ENCODE measurements at regions of chr1 and their contacts with region 1.

Region 1: DNA sequence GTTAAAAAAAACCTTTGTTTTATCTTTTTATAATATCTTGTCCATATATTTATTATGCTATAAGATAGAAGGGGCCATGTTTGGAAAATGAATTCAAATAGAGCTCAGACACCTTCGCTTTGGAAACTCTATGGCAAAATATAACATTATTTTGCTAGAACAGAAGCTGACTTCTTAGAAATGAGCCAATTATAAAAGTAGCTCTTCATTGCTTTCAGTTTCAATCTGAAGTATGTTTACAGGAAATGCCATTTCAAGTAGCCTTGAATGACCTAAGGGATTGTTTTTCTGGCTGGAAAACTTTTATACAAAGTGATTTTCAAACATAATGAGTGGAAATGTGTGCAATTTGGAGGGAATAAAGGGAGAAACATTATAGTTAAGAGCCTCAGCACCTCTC is 37.8 kb upstream of the GBP5 start:
- DNase-seq: no peak
- ATAC-seq: peak in 6 of 8 donors; percentile 61 to 88 (median 82)
- H3K4me3 ChIP-seq: peak overlapping the region in 4 of 10 donors; percentile 1 to 16 (median 8)
- H3K27ac ChIP-seq: peak overlapping the region; percentile 13 to 88 (median 74)
- H3K4me1 ChIP-seq: peaks cover 7 to 40% (median 28%) of the 10 kb centered on the region in 9 donors
- H3K27me3 ChIP-seq: no peaks in the 10 kb centered on the region
- CTCF ChIP-seq: no peak

Region 2: GRCh38 chr1:89261926-89262515 is 48.5 kb before region 1 on chr1:
- intact Hi-C with region 1: loop called in 1 of 10 experiments (anchors 10 kb)
- DNase-seq: peak in 1 of 2 donors; percentile 39
- ATAC-seq: peak in 5 of 8 donors; percentile 54 to 69 (median 60)
- H3K4me3 ChIP-seq: peak overlapping the region in 7 of 10 donors; percentile 11 to 44 (median 32)
- H3K27ac ChIP-seq: peak overlapping the region in 7 of 10 donors; percentile 3 to 59 (median 42)
- H3K4me1 ChIP-seq: peaks cover 0 to 47% (median 31%) of the 10 kb centered on the region in 9 donors
- H3K27me3 ChIP-seq: no peaks in the 10 kb centered on the region
- CTCF ChIP-seq: no peak

Region 3: GRCh38 chr1:89276690-89277089 is 33.8 kb before region 1 on chr1:
- intact Hi-C with region 1: loop called in 1 of 10 experiments (anchors 1 kb)
- DNase-seq: no peak
- ATAC-seq: no peak
- H3K4me3 ChIP-seq: no peak overlapping the region
- H3K27ac ChIP-seq: no peak overlapping the region
- H3K4me1 ChIP-seq: peaks cover 0 to 59% (median 0%) of the 10 kb centered on the region in 9 donors
- H3K27me3 ChIP-seq: no peaks in the 10 kb centered on the region
- CTCF ChIP-seq: peak in 3 of 9 donors; percentile 23 to 49 (median 28)

Region 4: DNA sequence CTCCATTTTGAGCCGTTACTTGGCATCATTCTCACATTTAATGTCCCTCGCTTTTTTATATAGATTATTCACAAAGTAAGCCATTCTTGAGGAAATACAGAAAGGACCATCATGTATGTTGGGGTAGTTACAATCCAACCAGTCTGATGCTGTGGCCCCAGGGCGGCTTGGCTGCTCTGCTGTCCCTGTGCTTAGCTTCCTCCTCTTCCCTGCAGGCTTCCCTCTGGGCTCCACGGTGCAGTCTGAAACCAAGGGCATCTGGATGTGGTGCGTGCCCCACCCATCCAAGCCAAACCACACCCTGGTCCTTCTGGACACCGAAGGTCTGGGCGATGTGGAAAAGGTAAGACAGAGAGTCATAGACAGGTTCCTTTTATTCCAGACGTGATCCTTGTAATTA is 58.8 kb after region 1 on chr1:
- intact Hi-C with region 1: no loop called
- DNase-seq: no peak
- ATAC-seq: no peak
- H3K4me3 ChIP-seq: no peak overlapping the region
- H3K27ac ChIP-seq: no peak overlapping the region
- H3K4me1 ChIP-seq: peaks cover 0 to under 1% (median 0%) of the 10 kb centered on the region in 9 donors
- H3K27me3 ChIP-seq: no peaks in the 10 kb centered on the region
- CTCF ChIP-seq: no peak

Measured in heart right ventricle (tissue), 16 donors.